Adrenal gland (tissue), 19 donors: ENCODE measurements at regions of chr12 and their contacts with region 1.

Region 1: GRCh38 chr12:106234449-106234848 is 13.4 kb downstream of the CKAP4 start:
- DNase-seq: no peak
- H3K4me3 ChIP-seq: no peak overlapping the region
- H3K27ac ChIP-seq: no peak overlapping the region
- H3K4me1 ChIP-seq: no peaks in the 10 kb centered on the region
- H3K27me3 ChIP-seq: no peaks in the 10 kb centered on the region
- CTCF ChIP-seq: no peak
- POLR2A ChIP-seq: no peak

Region 2: DNA sequence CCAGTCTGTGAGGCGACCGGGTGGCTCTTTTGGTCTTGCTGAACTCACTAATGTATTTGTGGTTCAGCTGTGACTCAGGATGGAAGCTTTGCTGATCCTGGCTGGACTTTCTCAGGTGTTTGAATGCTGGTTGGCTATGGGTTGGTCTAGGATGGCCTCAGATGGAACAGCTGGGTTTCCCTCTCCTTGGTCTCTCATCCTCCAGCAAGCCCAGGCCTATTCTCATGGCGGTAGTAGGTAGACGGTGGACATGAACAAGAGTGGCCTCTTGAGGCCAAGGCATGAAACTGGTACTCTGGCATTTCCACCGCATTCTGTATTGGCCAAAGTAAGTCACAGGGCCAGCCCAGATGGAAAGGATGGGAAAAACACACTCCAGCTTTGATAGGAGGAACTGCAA is 111.3 kb after region 1 on chr12:
- intact Hi-C with region 1: loop called (anchors 5 to 10 kb)
- DNase-seq: peak in 6 of 7 donors; percentile 60 to 80 (median 67)
- H3K4me3 ChIP-seq: no peak overlapping the region
- H3K27ac ChIP-seq: peak overlapping the region in 1 of 5 donors; percentile 35
- H3K4me1 ChIP-seq: peaks cover 24 to 36% of the 10 kb centered on the region in 2 donors
- H3K27me3 ChIP-seq: no peaks in the 10 kb centered on the region
- CTCF ChIP-seq: peak; percentile 21 to 59 (median 45)
- POLR2A ChIP-seq: no peak